Head of caudate nucleus (tissue), 42 donors: ENCODE measurements at regions of chr6 and their contacts with region 1.

Region 1: GRCh38 chr6:90493332-90493731 is 93.5 kb downstream of the MAP3K7 start:
- DNase-seq: no peak

Region 2: GRCh38 chr6:90574610-90575009 is 81.3 kb after region 1 on chr6:
- intact Hi-C with region 1: loop called (anchors 10 kb)
- DNase-seq: peak in 1 of 42 donors; percentile 1